AG04449 (cell line): ENCODE measurements at regions of chr1 and their contacts with region 1.

Region 1: DNA sequence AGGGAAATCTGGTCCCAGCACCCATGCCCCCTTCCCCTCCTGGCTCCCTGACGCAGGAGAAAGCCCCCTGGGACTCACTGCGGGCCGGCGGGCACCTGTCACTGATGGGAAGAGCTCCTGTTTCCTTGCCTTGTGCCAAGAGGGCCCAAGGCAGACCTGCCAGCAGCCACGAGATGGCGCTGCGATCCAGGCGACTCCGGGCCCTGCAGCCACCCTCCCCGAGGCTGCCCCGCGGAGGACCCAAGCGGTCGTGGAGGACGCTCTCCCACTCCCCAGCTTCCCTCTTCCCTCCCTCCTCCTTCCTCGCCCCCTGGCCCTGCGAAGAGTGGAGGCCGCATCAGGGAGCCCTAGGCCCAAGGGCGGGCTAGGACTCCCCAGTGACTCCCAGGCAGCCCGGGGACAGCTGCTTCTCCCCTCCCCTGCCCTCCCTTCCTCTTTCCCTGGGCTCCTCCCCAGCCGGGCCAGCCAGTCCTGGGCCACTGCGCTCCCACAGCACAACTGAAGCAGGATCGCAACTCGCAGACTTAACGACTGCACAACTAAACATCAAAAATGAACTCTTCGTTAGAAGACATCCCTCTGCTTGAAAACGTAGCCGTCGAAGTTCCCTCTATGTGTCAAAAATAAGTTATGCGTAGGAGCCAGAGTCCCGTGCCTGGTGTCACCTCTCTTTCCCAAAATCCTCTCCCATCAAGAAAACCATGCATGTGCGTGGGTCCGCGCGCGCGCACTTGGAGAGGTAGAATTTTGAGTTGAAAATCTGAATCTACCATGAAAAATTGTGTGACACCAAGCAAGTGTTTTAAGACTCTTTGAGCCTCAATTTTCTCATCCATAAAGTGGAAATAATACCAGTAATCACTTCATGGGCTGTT is 34.2 kb downstream of the BATF3 start:
- DNase-seq: no peak
- H3K4me3 ChIP-seq: peak overlapping the region; percentile 80
- CTCF ChIP-seq: peak; percentile 99

Region 2: GRCh38 chr1:212608209-212608955 is 57.1 kb before region 1 on chr1 and contains the start of gene ATF3:
- CTCF ChIA-PET with region 1: interaction called, 6 read pairs
- POLR2A ChIA-PET with region 1: interaction called, 18 read pairs
- DNase-seq: peak; percentile 97
- H3K4me3 ChIP-seq: peak within 1 kb of the TSS; percentile 82
- CTCF ChIP-seq: no peak

Region 3: GRCh38 chr1:212678456-212679410 is 13.3 kb after region 1 on chr1:
- CTCF ChIA-PET with region 1: interaction called, 21 read pairs
- POLR2A ChIA-PET with region 1: no interaction called
- DNase-seq: no peak
- H3K4me3 ChIP-seq: no peak overlapping the region
- CTCF ChIP-seq: no peak

Region 4: DNA sequence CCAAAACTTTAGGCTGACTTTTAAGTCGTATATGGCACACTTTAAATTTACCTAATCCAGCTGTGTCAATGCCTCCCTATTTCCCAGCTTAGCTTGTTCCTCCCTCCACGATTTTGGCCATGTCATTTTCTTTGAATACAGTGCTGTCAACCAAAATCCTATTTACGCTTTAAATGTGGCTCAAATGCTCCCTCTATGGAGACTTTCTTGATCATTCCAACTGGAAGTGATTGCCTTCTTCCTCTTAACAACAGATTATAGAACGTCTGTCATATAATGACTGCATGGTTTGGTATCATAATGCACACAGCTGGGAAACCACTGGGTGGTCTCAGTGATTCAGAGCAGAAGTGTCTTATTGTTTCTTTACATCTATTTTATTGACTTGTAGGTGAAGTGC is 53.0 kb after region 1 on chr1:
- CTCF ChIA-PET with region 1: interaction called, 24 read pairs
- POLR2A ChIA-PET with region 1: no interaction called
- DNase-seq: no peak
- H3K4me3 ChIP-seq: no peak overlapping the region
- CTCF ChIP-seq: peak; percentile 15

Region 5: GRCh38 chr1:212774584-212774983 is 109.1 kb after region 1 on chr1:
- CTCF ChIA-PET with region 1: interaction called, 29 read pairs
- POLR2A ChIA-PET with region 1: no interaction called
- DNase-seq: no peak
- H3K4me3 ChIP-seq: no peak overlapping the region
- CTCF ChIP-seq: no peak

Region 6: GRCh38 chr1:212791676-212792395 is 126.4 kb after region 1 on chr1 and contains the starts of genes NSL1 and TATDN3:
- CTCF ChIA-PET with region 1: interaction called, 57 read pairs
- POLR2A ChIA-PET with region 1: no interaction called
- DNase-seq: no peak
- H3K4me3 ChIP-seq: peak within 1 kb of the TSS; percentile 95
- CTCF ChIP-seq: no peak